ENCODE measurements at regions of chr14 and their contacts with region 1.

Region 1: DNA sequence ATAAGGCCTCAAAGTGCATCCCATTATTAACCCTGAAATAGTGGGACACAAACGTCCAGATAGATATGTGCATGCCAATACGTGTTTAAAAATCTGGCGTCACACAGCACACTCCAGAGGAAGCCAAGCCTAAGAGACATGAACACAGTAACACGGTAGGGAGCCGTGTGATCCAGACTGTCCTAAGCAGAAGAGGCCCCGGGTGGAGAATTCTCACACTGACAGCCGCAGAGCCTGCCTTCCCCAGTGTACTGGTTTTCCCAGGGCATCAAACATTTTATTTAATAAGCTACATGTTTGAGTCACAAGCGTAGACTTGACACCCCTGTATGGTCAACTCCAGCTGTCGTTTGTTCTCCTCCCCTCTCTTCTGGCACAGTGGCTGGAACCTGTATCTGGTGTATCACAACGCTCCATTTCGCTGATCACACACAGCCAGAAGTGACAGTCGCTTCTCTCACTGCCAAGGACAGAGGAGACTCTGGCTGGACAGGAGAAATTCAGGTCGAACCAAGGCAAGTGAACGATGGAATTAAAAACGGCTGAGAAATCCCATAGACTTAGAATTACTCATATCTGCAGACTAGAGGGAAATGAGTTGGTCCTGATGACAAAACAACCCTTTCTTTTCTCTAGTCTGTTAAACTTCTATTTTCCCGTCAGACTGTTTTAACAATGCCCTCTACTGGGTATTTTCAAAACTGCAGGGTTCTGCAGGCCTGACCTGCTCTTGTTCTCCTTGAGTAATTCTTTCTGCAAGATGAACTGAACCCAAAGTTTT is 359.9 kb downstream of the RGS6 start:
- DNase-seq: peak; percentile 54
- H3K4me3 ChIP-seq: no peak overlapping the region
- H3K27ac ChIP-seq: no peak overlapping the region
- H3K4me1 ChIP-seq: no peaks in the 10 kb centered on the region
- H3K27me3 ChIP-seq: no peaks in the 10 kb centered on the region
- CTCF ChIP-seq: peak; percentile 43 to 59

Region 2: DNA sequence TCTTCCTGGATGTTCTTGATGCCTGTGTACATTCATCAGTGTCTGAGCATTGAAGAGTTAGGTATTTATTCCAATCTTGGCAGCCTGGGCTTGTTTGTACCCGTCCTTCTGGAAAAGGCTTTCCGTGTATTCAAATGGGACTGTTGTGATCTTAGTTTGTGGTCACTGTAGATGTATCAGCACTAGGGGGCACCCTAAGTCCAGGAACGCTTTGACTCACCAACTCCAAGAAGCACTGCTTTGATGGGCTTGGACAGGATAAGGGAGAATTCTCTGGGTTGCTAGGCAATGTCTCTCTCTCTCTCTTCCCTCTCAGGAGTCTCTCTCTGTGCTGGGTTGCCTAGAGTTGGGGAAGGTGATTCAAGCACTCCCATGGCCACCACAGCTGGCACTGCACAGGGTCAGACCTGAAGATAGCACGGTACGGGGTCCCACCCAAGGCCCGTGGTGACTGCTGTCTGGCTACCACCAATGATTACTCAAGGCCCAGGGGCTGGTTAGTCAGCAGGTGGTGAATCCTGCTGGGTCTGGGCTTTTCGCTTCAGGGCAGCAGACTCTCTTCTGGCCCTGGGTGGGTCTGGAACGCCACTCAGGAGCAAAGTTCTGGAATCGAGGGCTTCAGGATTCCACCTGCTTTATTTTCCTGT is 571.0 kb before region 1 on chr14:
- CTCF ChIA-PET with region 1: no interaction called
- dilution Hi-C with region 1: no loop called
- in situ Hi-C with region 1: no loop called
- intact Hi-C with region 1: loop called (anchors 10 kb)
- DNase-seq: peak; percentile 86
- H3K4me3 ChIP-seq: no peak overlapping the region
- H3K27ac ChIP-seq: no peak overlapping the region
- H3K4me1 ChIP-seq: peaks cover 19% of the 10 kb centered on the region
- H3K27me3 ChIP-seq: no peaks in the 10 kb centered on the region
- CTCF ChIP-seq: peak; percentile 48 to 79

Region 3: DNA sequence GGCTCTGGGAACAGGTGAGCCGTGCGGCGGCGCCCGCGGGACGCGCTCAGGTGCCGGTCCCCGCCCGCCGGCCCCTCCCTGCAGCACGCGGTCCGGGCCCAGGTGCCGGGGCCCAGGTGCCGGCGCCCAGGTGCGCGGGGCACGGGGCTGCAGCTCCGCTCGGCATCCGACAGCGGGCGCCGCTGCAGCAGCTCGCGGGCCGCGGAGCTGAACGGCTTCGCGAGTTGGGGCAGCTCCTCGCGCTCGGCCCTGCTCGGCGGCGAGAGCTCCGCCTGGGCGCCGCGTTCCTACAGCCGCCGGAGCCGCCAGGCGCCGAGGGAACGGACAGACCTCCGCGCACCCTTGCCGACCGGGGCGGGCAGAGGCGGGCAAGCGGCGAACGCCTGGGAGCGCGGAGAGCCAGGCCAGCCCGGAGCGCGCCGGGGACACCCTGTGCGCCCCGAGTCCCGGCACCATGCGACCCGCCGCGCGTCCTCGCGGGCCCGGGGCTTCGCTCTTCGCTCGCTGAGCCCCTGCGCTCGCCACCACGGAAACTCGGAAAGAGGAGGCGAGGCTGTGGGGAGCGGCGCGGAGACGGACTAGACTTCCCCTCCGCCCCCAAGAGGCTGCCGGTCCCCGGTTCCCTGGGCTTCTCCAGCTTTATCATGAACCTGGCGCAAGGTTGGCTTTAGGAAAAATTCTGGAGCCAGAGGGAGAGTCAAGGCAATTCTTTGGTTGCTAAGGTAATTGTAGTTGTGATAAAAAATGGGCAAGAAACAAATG is 359.7 kb before region 1 on chr14 and contains the start of gene RGS6:
- CTCF ChIA-PET with region 1: no interaction called
- dilution Hi-C with region 1: no loop called
- in situ Hi-C with region 1: no loop called
- intact Hi-C with region 1: loop called (anchors 1 kb)
- DNase-seq: peak; percentile 70
- H3K4me3 ChIP-seq: peak within 1 kb of the TSS; percentile 11 to 20 (median 11)
- H3K27ac ChIP-seq: no peak within 1 kb of the TSS
- H3K4me1 ChIP-seq: no peaks in the 10 kb centered on the region
- H3K27me3 ChIP-seq: peaks cover 22% of the 10 kb centered on the region
- CTCF ChIP-seq: peak in 1 of 2 donors; percentile 39
- total RNA-seq, gene RGS6: not detected

Region 4: GRCh38 chr14:72023722-72024407 is 268.2 kb before region 1 on chr14:
- CTCF ChIA-PET with region 1: no interaction called
- dilution Hi-C with region 1: no loop called
- in situ Hi-C with region 1: no loop called
- intact Hi-C with region 1: loop called (anchors 1 kb)
- DNase-seq: peak; percentile 14
- H3K4me3 ChIP-seq: no peak overlapping the region
- H3K27ac ChIP-seq: no peak overlapping the region
- H3K4me1 ChIP-seq: peaks cover 17% of the 10 kb centered on the region
- H3K27me3 ChIP-seq: no peaks in the 10 kb centered on the region
- CTCF ChIP-seq: peak; percentile 51 to 55

Region 5: GRCh38 chr14:72420725-72421474 is 128.8 kb after region 1 on chr14:
- CTCF ChIA-PET with region 1: no interaction called
- dilution Hi-C with region 1: no loop called
- in situ Hi-C with region 1: no loop called
- intact Hi-C with region 1: loop called (anchors 5 kb)
- DNase-seq: peak; percentile 38
- H3K4me3 ChIP-seq: no peak overlapping the region
- H3K27ac ChIP-seq: no peak overlapping the region
- H3K4me1 ChIP-seq: no peaks in the 10 kb centered on the region
- H3K27me3 ChIP-seq: no peaks in the 10 kb centered on the region
- CTCF ChIP-seq: peak; percentile 96 to 99

Region 6: DNA sequence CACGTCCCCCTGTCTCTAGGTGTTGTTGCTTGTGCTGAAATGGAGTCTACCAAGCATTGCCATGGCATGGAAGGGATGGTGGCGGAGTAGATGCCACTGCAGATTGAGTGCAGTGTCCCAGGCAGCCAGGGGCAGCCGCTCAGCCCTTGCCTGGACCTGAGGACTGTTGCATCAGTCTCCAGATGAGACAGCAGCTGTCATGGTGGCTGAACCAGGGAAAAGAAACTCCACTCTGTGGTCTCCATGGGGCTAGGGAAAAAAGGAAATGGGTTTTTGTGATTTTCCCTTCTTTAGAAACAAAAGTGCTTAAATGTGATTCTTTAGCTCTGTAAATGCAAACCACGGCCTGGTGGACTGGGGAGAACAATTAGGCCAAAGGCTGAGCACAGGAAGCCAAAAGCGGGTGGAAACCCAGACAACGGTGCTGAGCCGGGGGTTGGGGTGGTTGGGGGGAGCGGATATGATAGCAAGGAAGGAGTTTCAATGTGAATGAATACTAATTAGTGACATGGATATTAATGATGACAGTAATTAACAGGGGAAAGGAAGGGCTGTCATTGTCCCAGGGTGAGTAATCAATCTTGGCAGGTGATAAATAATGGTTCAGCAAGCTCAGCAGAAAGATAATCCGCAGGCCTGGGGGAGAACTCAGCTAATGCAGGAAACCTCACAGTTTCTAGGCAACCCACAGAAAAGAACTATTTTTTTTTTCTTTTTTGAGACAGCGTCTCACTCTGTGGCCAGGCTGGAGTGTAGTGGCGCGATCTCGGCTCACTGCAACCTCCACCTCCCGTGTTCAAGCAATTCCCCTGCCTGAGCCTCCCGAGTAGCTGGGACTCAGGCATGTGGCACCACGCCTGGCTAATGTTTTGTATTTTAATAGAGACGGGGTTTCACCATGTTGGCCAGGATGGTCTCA is 159.2 kb after region 1 on chr14:
- CTCF ChIA-PET with region 1: no interaction called
- dilution Hi-C with region 1: no loop called
- in situ Hi-C with region 1: no loop called
- intact Hi-C with region 1: no loop called
- DNase-seq: no peak
- H3K4me3 ChIP-seq: no peak overlapping the region
- H3K27ac ChIP-seq: no peak overlapping the region
- H3K4me1 ChIP-seq: no peaks in the 10 kb centered on the region
- H3K27me3 ChIP-seq: no peaks in the 10 kb centered on the region
- CTCF ChIP-seq: no peak

Measured in mammary epithelial cell (primary cell).